ENCODE measurements at regions of chr5 and their contacts with region 1.

Region 1: GRCh38 chr5:74673011-74673790 is 11.8 kb upstream of the HEXB start:
- DNase-seq: no peak
- ATAC-seq: peak; percentile 70 to 79
- H3K4me3 ChIP-seq: peak overlapping the region; percentile 20 to 36 (median 28)
- H3K27ac ChIP-seq: peak overlapping the region in 3 of 4 donors; percentile 16 to 55 (median 21)
- H3K4me1 ChIP-seq: peaks cover 0 to 4% of the 10 kb centered on the region in 2 donors
- H3K27me3 ChIP-seq: no peaks in the 10 kb centered on the region
- CTCF ChIP-seq: peak in 4 of 5 experiments; percentile 22 to 57 (median 40)
- POLR2A ChIP-seq: no peak

Region 2: DNA sequence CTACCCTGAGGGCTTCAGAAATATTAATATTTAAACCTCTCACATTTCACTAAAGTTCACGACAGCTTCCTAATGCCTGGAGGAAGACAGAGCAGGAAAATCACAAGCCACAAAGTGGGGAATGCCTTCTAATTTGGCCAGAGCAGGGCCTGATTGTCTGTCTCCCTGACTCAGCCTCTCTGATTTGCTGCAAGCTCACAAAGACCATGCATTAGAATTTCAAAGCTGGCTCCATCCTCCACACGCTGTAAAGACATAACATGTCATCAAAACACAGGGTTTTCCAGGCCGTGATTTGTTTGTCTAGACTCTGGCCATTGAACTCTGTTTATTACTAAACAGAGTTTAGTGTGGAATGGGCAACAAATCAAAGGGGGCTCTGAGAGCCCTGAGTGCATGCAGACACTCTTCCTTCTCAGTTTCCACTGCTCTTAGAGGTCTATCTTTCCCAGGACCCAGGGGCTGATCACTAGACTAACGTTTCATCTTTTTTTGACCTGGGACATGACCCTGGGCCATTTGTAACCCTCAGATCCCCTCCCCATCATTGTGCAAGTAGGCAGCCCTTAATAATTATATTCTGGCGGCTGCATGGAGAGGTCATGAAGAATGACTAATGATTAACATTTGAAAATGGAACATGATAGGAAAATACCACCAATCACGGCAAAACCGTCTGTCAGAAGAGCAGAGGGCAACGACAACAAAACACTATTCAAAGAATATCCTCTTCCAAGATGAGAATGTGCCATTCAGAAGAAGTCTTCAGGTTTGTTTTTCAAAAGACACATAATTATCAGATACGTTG is 172.9 kb before region 1 on chr5:
- in situ Hi-C with region 1: no loop called
- intact Hi-C with region 1: no loop called
- DNase-seq: no peak
- ATAC-seq: no peak
- H3K4me3 ChIP-seq: no peak overlapping the region
- H3K27ac ChIP-seq: no peak overlapping the region
- H3K4me1 ChIP-seq: no peaks in the 10 kb centered on the region
- H3K27me3 ChIP-seq: no peaks in the 10 kb centered on the region
- CTCF ChIP-seq: no peak
- POLR2A ChIP-seq: no peak

Region 3: DNA sequence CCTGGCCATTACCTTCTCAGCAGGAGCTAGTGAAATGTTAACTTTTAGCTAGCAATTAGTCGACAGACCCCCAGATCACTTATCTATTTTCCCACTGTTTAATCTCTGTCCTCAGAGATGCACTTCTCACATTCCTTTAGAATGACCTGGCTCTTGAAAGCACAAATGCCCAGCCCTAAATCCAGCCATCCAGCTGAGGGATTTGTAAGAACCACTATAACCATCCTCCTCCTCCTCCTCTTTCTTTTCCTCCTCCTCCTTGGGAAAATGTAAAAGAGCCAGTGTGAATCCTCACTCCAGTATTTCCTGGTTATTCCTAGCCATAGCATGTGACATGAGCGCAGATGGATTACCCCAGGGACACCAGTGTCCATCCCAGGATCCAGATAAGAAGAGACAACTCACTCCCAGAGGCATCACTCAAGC is 157.0 kb before region 1 on chr5:
- in situ Hi-C with region 1: no loop called
- intact Hi-C with region 1: no loop called
- DNase-seq: no peak
- ATAC-seq: no peak
- H3K4me3 ChIP-seq: no peak overlapping the region
- H3K27ac ChIP-seq: no peak overlapping the region
- H3K4me1 ChIP-seq: no peaks in the 10 kb centered on the region
- H3K27me3 ChIP-seq: no peaks in the 10 kb centered on the region
- CTCF ChIP-seq: no peak
- POLR2A ChIP-seq: no peak

Region 4: GRCh38 chr5:74919487-74919886 is 246.3 kb after region 1 on chr5:
- in situ Hi-C with region 1: loop called in 1 of 4 experiments (anchors 25 kb)
- intact Hi-C with region 1: loop called (anchors 5 kb)
- DNase-seq: no peak
- ATAC-seq: no peak
- H3K4me3 ChIP-seq: no peak overlapping the region
- H3K27ac ChIP-seq: no peak overlapping the region
- H3K4me1 ChIP-seq: no peaks in the 10 kb centered on the region
- H3K27me3 ChIP-seq: no peaks in the 10 kb centered on the region
- CTCF ChIP-seq: peak in 3 of 5 experiments; percentile 25 to 29 (median 27)
- POLR2A ChIP-seq: no peak

Region 5: GRCh38 chr5:75681125-75681830 is 1008.1 kb after region 1 on chr5:
- in situ Hi-C with region 1: no loop called
- intact Hi-C with region 1: loop called (anchors 5 kb)
- DNase-seq: no peak
- ATAC-seq: no peak
- H3K4me3 ChIP-seq: no peak overlapping the region
- H3K27ac ChIP-seq: no peak overlapping the region
- H3K4me1 ChIP-seq: peaks cover 0 to 3% of the 10 kb centered on the region in 2 donors
- H3K27me3 ChIP-seq: no peaks in the 10 kb centered on the region
- CTCF ChIP-seq: peak in 4 of 5 experiments; percentile 40 to 77 (median 60)
- POLR2A ChIP-seq: no peak